PC-3 (cell line): ENCODE measurements at regions of chrX and their contacts with region 1.

Region 1: GRCh38 chrX:123833387-123833786 is 26.5 kb upstream of the XIAP start:
- DNase-seq: peak; percentile 83
- ATAC-seq: peak; percentile 80
- H3K4me3 ChIP-seq: no peak overlapping the region; the same call in 1 of the 2 replicates
- H3K27ac ChIP-seq: no peak overlapping the region
- H3K4me1 ChIP-seq: peaks cover 14% of the 10 kb centered on the region
- H3K27me3 ChIP-seq: no peaks in the 10 kb centered on the region
- CTCF ChIP-seq: peak; percentile 80

Region 2: GRCh38 chrX:123771449-123772064 is 61.8 kb before region 1 on chrX:
- CTCF ChIA-PET with region 1: no interaction called
- POLR2A ChIA-PET with region 1: no interaction called
- intact Hi-C with region 1: loop called (anchors 10 kb)
- DNase-seq: no peak
- ATAC-seq: no peak
- H3K4me3 ChIP-seq: no peak overlapping the region
- H3K27ac ChIP-seq: no peak overlapping the region
- H3K4me1 ChIP-seq: no peaks in the 10 kb centered on the region
- H3K27me3 ChIP-seq: no peaks in the 10 kb centered on the region
- CTCF ChIP-seq: no peak

Region 3: DNA sequence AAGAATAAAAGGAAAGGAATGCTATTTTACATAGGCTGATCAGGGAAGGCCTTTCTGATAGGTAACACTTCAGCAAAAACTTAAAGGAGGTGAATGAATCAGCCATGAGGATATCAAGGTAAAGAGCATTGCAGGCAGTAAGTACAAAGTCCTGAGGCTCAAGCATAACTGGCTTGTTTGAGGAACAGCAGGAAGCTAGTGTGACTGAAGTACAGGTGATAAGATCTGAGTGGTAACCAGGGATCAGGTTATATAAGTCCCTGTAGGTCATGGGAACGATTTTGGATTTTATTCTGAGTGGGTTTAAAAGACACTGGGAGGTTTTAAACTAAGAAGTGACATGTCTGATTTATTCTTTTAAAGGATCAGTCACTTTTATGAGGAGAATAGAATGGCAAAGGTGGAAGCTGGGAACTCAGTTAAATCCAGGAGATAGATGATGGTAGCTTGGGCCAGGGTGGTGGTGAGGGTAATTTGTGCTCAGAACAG is 53.4 kb before region 1 on chrX:
- CTCF ChIA-PET with region 1: interaction called, 33 read pairs
- POLR2A ChIA-PET with region 1: no interaction called
- intact Hi-C with region 1: loop called (anchors 10 kb)
- DNase-seq: peak; percentile 56
- ATAC-seq: peak; percentile 56
- H3K4me3 ChIP-seq: no peak overlapping the region
- H3K27ac ChIP-seq: peak overlapping the region; percentile 79
- H3K4me1 ChIP-seq: peaks cover 20% of the 10 kb centered on the region
- H3K27me3 ChIP-seq: no peaks in the 10 kb centered on the region
- CTCF ChIP-seq: no peak

Region 4: DNA sequence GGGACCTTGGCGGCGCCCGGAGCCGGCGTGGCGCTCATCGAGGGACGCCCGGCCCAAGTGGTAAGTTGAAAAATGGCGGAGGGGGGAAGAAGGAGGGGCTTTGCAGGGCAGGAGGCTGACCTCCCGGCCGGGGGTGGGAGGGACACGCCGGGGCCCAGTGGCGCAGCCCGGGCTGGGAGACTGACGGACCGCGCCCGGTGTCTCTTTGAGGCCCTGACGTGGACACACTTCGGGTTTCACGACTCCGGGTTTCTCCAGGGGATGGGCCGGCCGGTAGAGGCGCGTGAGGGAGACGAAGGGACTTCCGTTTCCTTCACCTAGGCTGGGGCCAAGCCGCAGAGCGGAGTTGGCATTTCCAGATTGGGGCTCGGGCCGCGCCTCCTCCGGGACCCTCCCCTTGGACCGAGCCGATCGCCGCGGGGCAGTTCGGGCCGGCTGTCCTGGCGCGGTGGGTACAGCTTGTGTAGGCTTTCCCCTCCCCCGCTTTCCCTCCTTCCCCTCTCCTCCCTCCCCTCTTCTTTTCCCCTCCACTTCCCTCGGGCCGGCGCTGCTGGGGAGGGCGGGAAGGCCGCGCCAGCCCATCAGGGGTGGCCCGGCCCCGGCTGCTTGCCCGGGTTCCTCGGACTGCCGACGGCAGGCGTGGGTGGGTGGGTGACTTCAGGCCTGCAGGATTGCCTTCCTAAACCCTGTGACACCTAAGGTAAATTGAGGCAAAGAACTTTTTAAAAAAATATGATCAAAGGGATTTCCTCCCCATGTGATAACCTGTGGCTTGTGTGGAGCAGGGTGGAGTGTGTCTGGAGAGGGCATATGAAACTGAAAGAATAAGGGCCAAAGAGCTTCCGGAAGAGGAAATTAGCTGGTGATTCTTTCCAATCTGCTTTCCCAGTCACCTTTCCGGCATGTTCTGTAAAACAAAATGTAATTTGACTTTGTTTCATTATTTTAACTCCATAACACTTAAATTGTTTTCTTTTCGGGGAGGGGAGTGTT is 26.8 kb after region 1 on chrX and contains the start of gene XIAP:
- CTCF ChIA-PET with region 1: no interaction called
- POLR2A ChIA-PET with region 1: no interaction called
- intact Hi-C with region 1: loop called (anchors 1 kb)
- DNase-seq: peak; percentile 82
- ATAC-seq: peak; percentile 86
- H3K4me3 ChIP-seq: peak within 1 kb of the TSS; percentile 90
- H3K27ac ChIP-seq: peak within 1 kb of the TSS; percentile 91
- H3K4me1 ChIP-seq: peaks cover 11% of the 10 kb centered on the region
- H3K27me3 ChIP-seq: no peaks in the 10 kb centered on the region
- CTCF ChIP-seq: no peak
- total RNA-seq, gene XIAP: 29.2 and 35.8 TPM in 2 replicates

Region 5: GRCh38 chrX:123884809-123885408 is 51.5 kb after region 1 on chrX:
- CTCF ChIA-PET with region 1: interaction called, 3 read pairs
- POLR2A ChIA-PET with region 1: no interaction called
- intact Hi-C with region 1: loop called (anchors 1 kb)
- DNase-seq: peak; percentile 68
- ATAC-seq: peak; percentile 50
- H3K4me3 ChIP-seq: no peak overlapping the region
- H3K27ac ChIP-seq: no peak overlapping the region
- H3K4me1 ChIP-seq: peaks cover 13% of the 10 kb centered on the region
- H3K27me3 ChIP-seq: no peaks in the 10 kb centered on the region
- CTCF ChIP-seq: peak; percentile 70

Region 6: GRCh38 chrX:123976706-123977316 is 143.4 kb after region 1 on chrX:
- CTCF ChIA-PET with region 1: interaction called, 10 read pairs
- POLR2A ChIA-PET with region 1: no interaction called
- intact Hi-C with region 1: loop called (anchors 1 kb)
- DNase-seq: peak; percentile 69
- ATAC-seq: peak; percentile 66
- H3K4me3 ChIP-seq: no peak overlapping the region
- H3K27ac ChIP-seq: no peak overlapping the region
- H3K4me1 ChIP-seq: peaks cover 14% of the 10 kb centered on the region
- H3K27me3 ChIP-seq: no peaks in the 10 kb centered on the region
- CTCF ChIP-seq: peak; percentile 67